ENCODE measurements at regions of chr13 and their contacts with region 1.

Region 1: GRCh38 chr13:40982772-40983171 is 36.3 kb downstream of the ELF1 start:
- DNase-seq: peak in 9 of 14 experiments; percentile 24 to 94 (median 52)
- ATAC-seq: peak; percentile 65
- H3K4me3 ChIP-seq: peak overlapping the region; percentile 71
- H3K4me3 Mint-ChIP-seq: peak overlapping the region; percentile 96
- H3K27ac ChIP-seq: peak overlapping the region; percentile 87 to 91
- H3K27ac Mint-ChIP-seq: peak overlapping the region; percentile 92
- H3K4me1 ChIP-seq: peaks cover 26% of the 10 kb centered on the region
- H3K4me1 Mint-ChIP-seq: peaks cover 59% of the 10 kb centered on the region
- H3K27me3 ChIP-seq: no peaks in the 10 kb centered on the region
- H3K27me3 Mint-ChIP-seq: no peaks in the 10 kb centered on the region
- CTCF ChIP-seq: no peak

Region 2: DNA sequence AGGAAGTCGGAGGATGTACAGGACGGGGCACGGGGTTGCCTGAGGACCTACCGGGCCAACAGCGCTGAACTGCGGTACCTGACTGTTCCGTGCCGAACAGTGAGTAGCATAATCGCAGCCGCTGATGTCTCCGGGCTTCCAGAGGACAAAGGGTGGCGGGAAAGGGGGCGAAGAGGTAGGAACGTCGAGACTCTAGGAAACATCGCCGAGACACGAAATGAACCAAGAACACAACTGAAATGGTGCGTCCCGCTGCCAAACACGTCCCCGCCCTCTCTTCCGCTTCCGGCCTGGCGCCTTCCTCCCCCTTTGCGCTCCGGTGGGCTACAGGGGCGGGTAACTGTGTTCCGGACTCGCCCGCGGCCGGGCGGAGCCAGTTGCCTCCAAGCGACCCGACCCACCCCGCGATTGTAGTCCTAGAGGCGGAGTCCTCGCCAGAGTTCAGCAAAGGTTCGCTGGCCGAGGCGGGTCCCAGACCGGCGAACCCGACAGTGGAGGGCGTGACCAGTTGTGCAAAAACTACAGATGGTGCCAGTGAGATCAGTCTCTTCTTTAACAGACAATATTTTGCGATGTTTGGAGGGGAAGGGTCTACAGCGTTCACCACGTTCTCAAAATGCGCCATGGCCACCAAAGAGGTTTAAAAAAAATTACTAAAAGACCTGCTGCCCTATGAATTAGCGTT is 211.7 kb before region 1 on chr13 and contains the start of gene MRPS31:
- CTCF ChIA-PET with region 1: no interaction called
- POLR2A ChIA-PET with region 1: interaction called, 3 read pairs
- intact Hi-C with region 1: loop called in 1 of 2 experiments (anchors 10 kb)
- DNase-seq: peak; percentile 87 to 96 (median 94)
- ATAC-seq: peak; percentile 92
- H3K4me3 ChIP-seq: peak within 1 kb of the TSS; percentile 90
- H3K4me3 Mint-ChIP-seq: peak within 1 kb of the TSS; percentile 98
- H3K27ac ChIP-seq: peak within 1 kb of the TSS; percentile 75 to 81
- H3K27ac Mint-ChIP-seq: peak within 1 kb of the TSS; percentile 95
- H3K4me1 ChIP-seq: peaks cover 26% of the 10 kb centered on the region
- H3K4me1 Mint-ChIP-seq: peaks cover 29% of the 10 kb centered on the region
- H3K27me3 ChIP-seq: no peaks in the 10 kb centered on the region
- H3K27me3 Mint-ChIP-seq: no peaks in the 10 kb centered on the region
- CTCF ChIP-seq: peak; percentile 16
- total RNA-seq, gene MRPS31: 8.3 to 9.5 TPM

Region 3: GRCh38 chr13:40863723-40864122 is 119.0 kb before region 1 on chr13:
- CTCF ChIA-PET with region 1: no interaction called
- POLR2A ChIA-PET with region 1: no interaction called
- intact Hi-C with region 1: no loop called
- DNase-seq: no peak
- ATAC-seq: no peak
- H3K4me3 ChIP-seq: no peak overlapping the region
- H3K4me3 Mint-ChIP-seq: no peak overlapping the region
- H3K27ac ChIP-seq: no peak overlapping the region
- H3K27ac Mint-ChIP-seq: no peak overlapping the region
- H3K4me1 ChIP-seq: no peaks in the 10 kb centered on the region
- H3K4me1 Mint-ChIP-seq: no peaks in the 10 kb centered on the region
- H3K27me3 ChIP-seq: no peaks in the 10 kb centered on the region
- H3K27me3 Mint-ChIP-seq: no peaks in the 10 kb centered on the region
- CTCF ChIP-seq: no peak

Region 4: DNA sequence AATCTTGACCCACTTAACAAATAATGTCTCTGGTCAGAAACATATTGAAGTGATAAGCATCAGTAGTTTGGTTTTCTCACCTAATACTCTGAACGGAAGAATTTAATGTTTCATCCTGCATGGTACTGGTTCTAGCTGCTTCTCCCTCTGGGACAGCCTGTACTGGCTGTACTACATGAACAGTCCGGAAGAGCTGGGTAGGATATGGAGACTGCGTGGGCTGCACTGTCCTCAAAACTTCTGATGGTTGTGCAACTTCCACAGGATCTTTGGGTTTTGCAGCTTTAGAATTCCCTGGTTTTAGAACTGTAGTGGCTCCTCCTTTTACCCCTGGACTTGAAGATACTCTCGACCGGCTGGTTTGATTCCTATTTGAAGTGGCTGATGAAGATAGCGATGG is 41.9 kb before region 1 on chr13:
- CTCF ChIA-PET with region 1: no interaction called
- POLR2A ChIA-PET with region 1: no interaction called
- intact Hi-C with region 1: no loop called
- DNase-seq: no peak
- ATAC-seq: no peak
- H3K4me3 ChIP-seq: no peak overlapping the region
- H3K4me3 Mint-ChIP-seq: no peak overlapping the region
- H3K27ac ChIP-seq: no peak overlapping the region
- H3K27ac Mint-ChIP-seq: peak overlapping the region; percentile 61
- H3K4me1 ChIP-seq: no peaks in the 10 kb centered on the region
- H3K4me1 Mint-ChIP-seq: peaks cover 61% of the 10 kb centered on the region
- H3K27me3 ChIP-seq: no peaks in the 10 kb centered on the region
- H3K27me3 Mint-ChIP-seq: no peaks in the 10 kb centered on the region
- CTCF ChIP-seq: no peak

Region 5: GRCh38 chr13:40969169-40969901 is 13.4 kb before region 1 on chr13:
- CTCF ChIA-PET with region 1: interaction called, 5 read pairs
- POLR2A ChIA-PET with region 1: interaction called, 12 read pairs
- intact Hi-C with region 1: loop called in 1 of 2 experiments (anchors 1 kb)
- DNase-seq: peak in 7 of 14 experiments; percentile 9 to 62 (median 48)
- ATAC-seq: peak; percentile 63
- H3K4me3 ChIP-seq: no peak overlapping the region
- H3K4me3 Mint-ChIP-seq: peak overlapping the region; percentile 71
- H3K27ac ChIP-seq: no peak overlapping the region
- H3K27ac Mint-ChIP-seq: peak overlapping the region; percentile 34
- H3K4me1 ChIP-seq: peaks cover 44% of the 10 kb centered on the region
- H3K4me1 Mint-ChIP-seq: peaks cover 98% of the 10 kb centered on the region
- H3K27me3 ChIP-seq: no peaks in the 10 kb centered on the region
- H3K27me3 Mint-ChIP-seq: no peaks in the 10 kb centered on the region
- CTCF ChIP-seq: no peak

Region 6: DNA sequence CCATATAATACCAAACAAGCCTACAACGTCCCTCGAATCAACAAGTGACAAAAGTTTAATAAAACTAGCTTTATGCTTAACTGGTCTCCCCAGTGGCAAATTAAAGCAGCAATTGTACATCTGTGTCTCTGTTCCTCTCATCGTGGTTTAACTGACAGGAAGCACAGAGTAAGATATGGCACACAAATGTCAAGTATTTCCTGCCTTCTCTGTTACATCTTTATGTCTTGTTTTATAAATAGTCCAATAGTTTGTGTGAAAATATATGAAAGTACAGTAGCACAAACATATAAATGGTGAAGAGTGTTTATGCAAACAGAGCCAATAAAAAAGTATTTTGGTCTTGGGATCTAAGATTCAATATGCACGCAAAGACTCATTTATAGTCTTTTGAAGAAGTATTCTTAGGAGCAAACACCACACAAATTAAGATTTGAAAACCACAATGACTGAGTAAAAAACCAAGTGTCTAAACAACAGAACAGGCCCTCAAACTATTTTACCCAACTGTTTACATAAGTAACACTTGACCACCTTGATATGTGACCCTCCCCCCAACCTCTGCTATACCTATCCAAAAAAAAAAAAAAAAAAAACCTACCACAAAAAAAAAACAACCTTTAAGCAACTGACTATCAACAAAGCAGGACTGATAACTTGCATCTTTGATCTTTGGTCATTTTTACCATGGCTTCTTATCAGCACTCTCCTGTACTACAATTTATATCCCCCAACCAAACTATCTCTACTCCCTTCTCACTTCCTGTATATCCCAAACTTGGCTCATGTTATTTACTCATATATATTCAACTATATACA is 22.3 kb after region 1 on chr13:
- CTCF ChIA-PET with region 1: interaction called, 6 read pairs
- POLR2A ChIA-PET with region 1: interaction called, 14 read pairs
- intact Hi-C with region 1: loop called in 1 of 2 experiments (anchors 2 kb)
- DNase-seq: peak in 4 of 14 experiments; percentile 19 to 82 (median 76)
- ATAC-seq: peak; percentile 85
- H3K4me3 ChIP-seq: peak overlapping the region; percentile 21
- H3K4me3 Mint-ChIP-seq: peak overlapping the region; percentile 80
- H3K27ac ChIP-seq: peak overlapping the region; percentile 51 to 69
- H3K27ac Mint-ChIP-seq: peak overlapping the region; percentile 91
- H3K4me1 ChIP-seq: peaks cover 44% of the 10 kb centered on the region
- H3K4me1 Mint-ChIP-seq: peaks cover 77% of the 10 kb centered on the region
- H3K27me3 ChIP-seq: no peaks in the 10 kb centered on the region
- H3K27me3 Mint-ChIP-seq: no peaks in the 10 kb centered on the region
- CTCF ChIP-seq: no peak

Region 7: GRCh38 chr13:41029629-41030028 is 46.9 kb after region 1 on chr13:
- CTCF ChIA-PET with region 1: no interaction called
- POLR2A ChIA-PET with region 1: no interaction called
- intact Hi-C with region 1: no loop called
- DNase-seq: peak in 2 of 14 experiments; percentile 39 to 44
- ATAC-seq: peak; percentile 34
- H3K4me3 ChIP-seq: no peak overlapping the region
- H3K4me3 Mint-ChIP-seq: no peak overlapping the region
- H3K27ac ChIP-seq: no peak overlapping the region
- H3K27ac Mint-ChIP-seq: no peak overlapping the region
- H3K4me1 ChIP-seq: no peaks in the 10 kb centered on the region
- H3K4me1 Mint-ChIP-seq: peaks cover 27% of the 10 kb centered on the region
- H3K27me3 ChIP-seq: no peaks in the 10 kb centered on the region
- H3K27me3 Mint-ChIP-seq: no peaks in the 10 kb centered on the region
- CTCF ChIP-seq: peak; percentile 24

Region 8: GRCh38 chr13:41054212-41054877 is 71.6 kb after region 1 on chr13:
- CTCF ChIA-PET with region 1: interaction called, 3 read pairs
- POLR2A ChIA-PET with region 1: interaction called, 4 read pairs
- intact Hi-C with region 1: loop called (anchors 2 kb)
- DNase-seq: peak in 10 of 14 experiments; percentile 5 to 80 (median 24)
- ATAC-seq: peak; percentile 77
- H3K4me3 ChIP-seq: no peak overlapping the region
- H3K4me3 Mint-ChIP-seq: peak overlapping the region; percentile 39
- H3K27ac ChIP-seq: no peak overlapping the region
- H3K27ac Mint-ChIP-seq: peak overlapping the region; percentile 56
- H3K4me1 ChIP-seq: peaks cover 16% of the 10 kb centered on the region
- H3K4me1 Mint-ChIP-seq: peaks cover 57% of the 10 kb centered on the region
- H3K27me3 ChIP-seq: no peaks in the 10 kb centered on the region
- H3K27me3 Mint-ChIP-seq: no peaks in the 10 kb centered on the region
- CTCF ChIP-seq: peak; percentile 76